ENCODE measurements at regions of chr4 and their contacts with region 1.

Region 1: GRCh38 chr4:123390846-123391456 is 5.6 kb upstream of the SPRY1 start:
- DNase-seq: no peak
- ATAC-seq: no peak
- H3K4me3 ChIP-seq: no peak overlapping the region
- H3K27ac ChIP-seq: no peak overlapping the region
- H3K4me1 ChIP-seq: peaks cover 0 to 21% (median 10%) of the 10 kb centered on the region in 12 donors
- H3K27me3 ChIP-seq: no peaks in the 10 kb centered on the region
- CTCF ChIP-seq: peak; percentile 22 to 70 (median 51)
- POLR2A ChIP-seq: no peak

Region 2: GRCh38 chr4:123114915-123115756 is 275.8 kb before region 1 on chr4:
- intact Hi-C with region 1: loop called in 4 of 10 experiments (anchors 5 to 10 kb)
- DNase-seq: peak in 2 of 5 donors; percentile 20 to 63
- ATAC-seq: peak in 1 of 4 donors; percentile 18
- H3K4me3 ChIP-seq: no peak overlapping the region
- H3K27ac ChIP-seq: no peak overlapping the region
- H3K4me1 ChIP-seq: peaks cover 0 to 13% (median 2%) of the 10 kb centered on the region in 12 donors
- H3K27me3 ChIP-seq: no peaks in the 10 kb centered on the region
- CTCF ChIP-seq: no peak
- POLR2A ChIP-seq: no peak

Region 3: DNA sequence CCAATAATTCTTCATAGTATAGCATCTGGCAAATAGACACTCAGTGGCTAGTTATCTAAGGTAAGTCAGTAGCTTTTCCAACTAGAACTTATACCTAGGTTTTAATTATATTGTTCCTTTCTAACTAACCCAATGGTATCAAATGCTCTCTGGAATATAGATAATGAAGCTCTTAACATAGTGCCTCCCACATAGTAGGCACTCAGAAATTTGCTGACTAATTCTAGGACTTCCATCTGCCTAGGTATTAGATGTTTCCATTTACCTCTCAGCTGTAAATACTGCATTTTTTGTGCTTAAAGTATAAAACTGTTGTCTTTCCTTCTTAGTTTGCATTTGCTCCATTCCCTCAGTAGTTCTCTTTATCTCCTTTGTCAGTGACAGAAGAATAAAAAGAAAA is 208.7 kb before region 1 on chr4:
- intact Hi-C with region 1: no loop called
- DNase-seq: no peak
- ATAC-seq: no peak
- H3K4me3 ChIP-seq: no peak overlapping the region
- H3K27ac ChIP-seq: no peak overlapping the region
- H3K4me1 ChIP-seq: no peaks in the 10 kb centered on the region
- H3K27me3 ChIP-seq: no peaks in the 10 kb centered on the region
- CTCF ChIP-seq: no peak
- POLR2A ChIP-seq: no peak

Region 4: GRCh38 chr4:123250843-123251242 is 140.1 kb before region 1 on chr4:
- intact Hi-C with region 1: loop called in 7 of 10 experiments (anchors 2 to 10 kb)
- DNase-seq: peak; percentile 45 to 70 (median 63)
- ATAC-seq: peak; percentile 52 to 83 (median 82)
- H3K4me3 ChIP-seq: no peak overlapping the region
- H3K27ac ChIP-seq: peak overlapping the region in 9 of 12 donors; percentile 21 to 70 (median 44)
- H3K4me1 ChIP-seq: peaks cover 0 to 47% (median 29%) of the 10 kb centered on the region in 12 donors
- H3K27me3 ChIP-seq: no peaks in the 10 kb centered on the region
- CTCF ChIP-seq: no peak
- POLR2A ChIP-seq: no peak

Region 5: DNA sequence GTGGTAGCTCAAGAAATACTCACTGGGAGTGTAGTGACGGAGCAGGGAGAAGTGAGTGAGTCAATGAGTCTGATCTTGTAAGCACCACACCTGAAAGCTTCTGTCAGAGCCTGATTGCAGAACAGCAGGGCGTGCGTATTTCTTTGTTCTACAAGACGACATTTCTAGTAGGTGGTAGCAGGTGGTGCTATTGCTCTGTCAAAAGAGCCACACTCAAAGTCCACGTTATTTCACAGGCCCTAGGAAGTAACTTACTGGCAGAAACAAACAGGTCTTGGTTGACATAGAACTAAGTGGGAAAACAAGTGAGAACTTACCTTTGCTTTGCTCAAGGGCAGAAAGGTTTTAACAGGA is 40.8 kb before region 1 on chr4:
- intact Hi-C with region 1: loop called in 2 of 10 experiments (anchors 5 kb)
- DNase-seq: no peak
- ATAC-seq: peak in 1 of 4 donors; percentile 25
- H3K4me3 ChIP-seq: no peak overlapping the region
- H3K27ac ChIP-seq: no peak overlapping the region
- H3K4me1 ChIP-seq: peaks cover 0 to 30% (median 16%) of the 10 kb centered on the region in 12 donors
- H3K27me3 ChIP-seq: no peaks in the 10 kb centered on the region
- CTCF ChIP-seq: peak in 1 of 12 donors; percentile 27
- POLR2A ChIP-seq: no peak

Measured in heart left ventricle (tissue), 16 donors.